ENCODE measurements at regions of chr11 and their contacts with region 1.

Region 1: GRCh38 chr11:114036156-114036811 is 23.2 kb upstream of the ZBTB16 start:
- DNase-seq: peak; percentile 93 to 98
- H3K4me3 ChIP-seq: peak overlapping the region; percentile 29
- H3K4me3 Mint-ChIP-seq: peak overlapping the region; percentile 57
- H3K27ac Mint-ChIP-seq: no peak overlapping the region
- H3K4me1 ChIP-seq: peaks cover 33% of the 10 kb centered on the region
- H3K4me1 Mint-ChIP-seq: peaks cover 23% of the 10 kb centered on the region
- H3K27me3 ChIP-seq: no peaks in the 10 kb centered on the region
- H3K27me3 Mint-ChIP-seq: no peaks in the 10 kb centered on the region
- CTCF ChIP-seq: peak; percentile 98 to 99

Region 2: GRCh38 chr11:113806406-113806805 is 229.9 kb before region 1 on chr11:
- CTCF ChIA-PET with region 1: no interaction called
- POLR2A ChIA-PET with region 1: no interaction called
- intact Hi-C with region 1: no loop called
- DNase-seq: peak; percentile 77 to 82
- H3K4me3 ChIP-seq: no peak overlapping the region
- H3K4me3 Mint-ChIP-seq: no peak overlapping the region
- H3K27ac Mint-ChIP-seq: no peak overlapping the region
- H3K4me1 ChIP-seq: no peaks in the 10 kb centered on the region
- H3K4me1 Mint-ChIP-seq: no peaks in the 10 kb centered on the region
- H3K27me3 ChIP-seq: no peaks in the 10 kb centered on the region
- H3K27me3 Mint-ChIP-seq: no peaks in the 10 kb centered on the region
- CTCF ChIP-seq: peak; percentile 87 to 90

Region 3: GRCh38 chr11:114049050-114049449 is 12.8 kb after region 1 on chr11:
- CTCF ChIA-PET with region 1: interaction called, 4 read pairs
- POLR2A ChIA-PET with region 1: no interaction called
- intact Hi-C with region 1: loop called (anchors 1 kb)
- DNase-seq: no peak
- H3K4me3 ChIP-seq: no peak overlapping the region
- H3K4me3 Mint-ChIP-seq: no peak overlapping the region
- H3K27ac Mint-ChIP-seq: no peak overlapping the region
- H3K4me1 ChIP-seq: peaks cover 11% of the 10 kb centered on the region
- H3K4me1 Mint-ChIP-seq: peaks cover 12% of the 10 kb centered on the region
- H3K27me3 ChIP-seq: no peaks in the 10 kb centered on the region
- H3K27me3 Mint-ChIP-seq: no peaks in the 10 kb centered on the region
- CTCF ChIP-seq: no peak

Region 4: GRCh38 chr11:114077482-114078305 is 41.4 kb after region 1 on chr11:
- CTCF ChIA-PET with region 1: interaction called, 3 read pairs
- POLR2A ChIA-PET with region 1: no interaction called
- intact Hi-C with region 1: loop called (anchors 1 kb)
- DNase-seq: peak; percentile 75 to 77
- H3K4me3 ChIP-seq: peak overlapping the region; percentile 25
- H3K4me3 Mint-ChIP-seq: peak overlapping the region; percentile 72
- H3K27ac Mint-ChIP-seq: peak overlapping the region; percentile 90
- H3K4me1 ChIP-seq: peaks cover 66% of the 10 kb centered on the region
- H3K4me1 Mint-ChIP-seq: peaks cover 57% of the 10 kb centered on the region
- H3K27me3 ChIP-seq: no peaks in the 10 kb centered on the region
- H3K27me3 Mint-ChIP-seq: no peaks in the 10 kb centered on the region
- CTCF ChIP-seq: no peak

Region 5: DNA sequence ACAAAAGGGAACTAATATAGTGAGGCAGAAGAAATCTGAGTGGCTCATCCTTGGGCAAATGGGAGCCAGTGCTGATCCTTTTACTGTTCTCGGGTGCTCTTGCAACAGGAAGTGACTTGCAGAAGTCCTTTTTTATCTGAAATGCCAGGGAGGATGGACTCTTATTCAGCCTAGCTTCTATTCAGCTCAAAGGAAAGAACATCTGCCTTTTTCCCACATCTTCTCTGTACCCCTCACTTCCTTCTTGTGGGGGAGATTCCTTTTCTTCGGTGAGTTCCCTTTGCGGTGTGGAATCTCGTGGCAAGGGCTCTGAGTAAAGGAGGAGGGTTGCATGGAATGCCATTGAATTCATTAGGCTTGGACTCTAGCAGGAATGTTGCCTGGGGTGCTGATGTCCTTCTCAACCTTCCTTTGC is 99.5 kb after region 1 on chr11:
- CTCF ChIA-PET with region 1: interaction called, 3 read pairs
- POLR2A ChIA-PET with region 1: no interaction called
- intact Hi-C with region 1: loop called (anchors 1 kb)
- DNase-seq: no peak
- H3K4me3 ChIP-seq: no peak overlapping the region
- H3K4me3 Mint-ChIP-seq: no peak overlapping the region
- H3K27ac Mint-ChIP-seq: no peak overlapping the region
- H3K4me1 ChIP-seq: peaks cover 12% of the 10 kb centered on the region; the same call in 1 of the 2 replicates
- H3K4me1 Mint-ChIP-seq: peaks cover 18% of the 10 kb centered on the region
- H3K27me3 ChIP-seq: no peaks in the 10 kb centered on the region
- H3K27me3 Mint-ChIP-seq: no peaks in the 10 kb centered on the region
- CTCF ChIP-seq: no peak

Region 6: GRCh38 chr11:114197799-114198500 is 161.7 kb after region 1 on chr11:
- CTCF ChIA-PET with region 1: interaction called, 9 read pairs
- POLR2A ChIA-PET with region 1: no interaction called
- intact Hi-C with region 1: loop called (anchors 1 kb)
- DNase-seq: no peak
- H3K4me3 ChIP-seq: no peak overlapping the region
- H3K4me3 Mint-ChIP-seq: no peak overlapping the region
- H3K27ac Mint-ChIP-seq: no peak overlapping the region
- H3K4me1 ChIP-seq: no peaks in the 10 kb centered on the region; the same call in 1 of the 2 replicates
- H3K4me1 Mint-ChIP-seq: peaks cover 7% of the 10 kb centered on the region
- H3K27me3 ChIP-seq: no peaks in the 10 kb centered on the region
- H3K27me3 Mint-ChIP-seq: no peaks in the 10 kb centered on the region
- CTCF ChIP-seq: no peak

Region 7: DNA sequence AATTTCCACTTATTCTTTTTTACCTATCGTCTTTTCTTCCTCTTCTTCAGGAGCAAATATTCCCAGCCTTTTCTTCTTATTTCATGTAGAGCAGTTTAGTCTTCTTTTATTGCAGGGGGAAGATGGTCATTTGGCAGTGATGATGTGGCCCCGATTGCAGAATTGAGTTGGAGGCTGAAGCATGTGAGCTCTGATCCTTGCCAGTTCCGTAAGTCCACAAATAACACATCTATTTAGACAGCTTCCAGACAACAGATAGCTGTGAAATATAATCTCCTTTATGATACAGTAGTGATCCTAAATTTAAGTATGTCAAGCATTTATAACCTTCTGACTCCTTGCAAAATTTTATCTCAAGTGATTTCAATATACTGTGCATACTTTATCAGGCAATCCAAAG is 430.5 kb after region 1 on chr11:
- CTCF ChIA-PET with region 1: no interaction called
- POLR2A ChIA-PET with region 1: no interaction called
- intact Hi-C with region 1: no loop called
- DNase-seq: no peak
- H3K4me3 ChIP-seq: no peak overlapping the region
- H3K4me3 Mint-ChIP-seq: no peak overlapping the region
- H3K27ac Mint-ChIP-seq: no peak overlapping the region
- H3K4me1 ChIP-seq: no peaks in the 10 kb centered on the region; the same call in 1 of the 2 replicates
- H3K4me1 Mint-ChIP-seq: no peaks in the 10 kb centered on the region
- H3K27me3 ChIP-seq: no peaks in the 10 kb centered on the region
- H3K27me3 Mint-ChIP-seq: no peaks in the 10 kb centered on the region
- CTCF ChIP-seq: no peak